MCF 10A (cell line): ENCODE measurements at regions of chr12 and their contacts with region 1.

Region 1: DNA sequence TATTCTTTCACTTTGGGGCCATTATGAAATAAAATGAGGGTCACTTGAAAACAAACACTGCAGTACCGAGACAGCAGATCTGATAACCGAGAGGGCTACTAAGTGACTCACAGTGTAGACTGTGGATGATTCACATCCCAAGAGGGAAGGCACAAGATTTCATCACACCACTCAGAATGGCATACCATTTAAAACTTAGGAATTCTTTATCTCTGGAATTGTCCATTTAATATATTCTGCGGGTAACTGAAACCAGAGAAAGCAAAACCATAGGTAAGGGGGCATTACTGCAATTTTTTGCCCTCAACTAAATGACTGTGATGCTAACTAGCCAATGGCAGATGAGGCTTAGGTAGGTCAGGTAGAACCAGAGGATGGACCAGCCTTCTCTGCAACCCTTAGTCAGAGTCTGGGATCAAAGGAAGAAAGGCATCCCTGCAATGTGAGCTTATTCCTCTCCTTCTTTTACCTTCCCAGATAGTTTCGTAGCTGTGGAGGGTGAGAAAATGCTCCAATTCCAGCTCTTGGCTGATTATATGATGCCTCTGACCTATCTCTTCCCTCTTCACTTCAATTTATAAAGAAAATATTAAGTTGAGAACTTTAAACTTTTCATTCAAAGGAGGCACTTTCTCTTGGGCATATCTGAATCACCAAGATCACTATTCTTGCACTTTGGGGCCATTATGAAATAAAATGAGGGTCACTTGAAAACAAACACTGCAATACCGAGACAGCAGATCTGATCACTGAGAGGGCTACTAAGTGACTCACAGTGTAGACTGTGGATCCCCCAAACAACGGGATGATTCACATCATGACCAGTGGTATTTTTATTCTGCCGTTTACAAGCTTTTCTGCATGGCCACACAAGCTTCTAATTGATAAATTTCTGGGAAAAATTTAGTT is 6.8 kb downstream of the ART4 start:
- DNase-seq: peak; percentile 88
- H3K4me3 Mint-ChIP-seq: peak overlapping the region; percentile 65
- H3K27ac Mint-ChIP-seq: peak overlapping the region; percentile 89
- H3K4me1 Mint-ChIP-seq: peaks cover 39% of the 10 kb centered on the region
- H3K27me3 Mint-ChIP-seq: no peaks in the 10 kb centered on the region
- CTCF ChIP-seq: no peak

Region 2: GRCh38 chr12:14303661-14304155 is 532.8 kb before region 1 on chr12:
- CTCF ChIA-PET with region 1: no interaction called
- POLR2A ChIA-PET with region 1: no interaction called
- intact Hi-C with region 1: no loop called
- DNase-seq: no peak
- H3K4me3 Mint-ChIP-seq: no peak overlapping the region
- H3K27ac Mint-ChIP-seq: no peak overlapping the region
- H3K4me1 Mint-ChIP-seq: peaks cover 8% of the 10 kb centered on the region
- H3K27me3 Mint-ChIP-seq: no peaks in the 10 kb centered on the region
- CTCF ChIP-seq: no peak

Region 3: DNA sequence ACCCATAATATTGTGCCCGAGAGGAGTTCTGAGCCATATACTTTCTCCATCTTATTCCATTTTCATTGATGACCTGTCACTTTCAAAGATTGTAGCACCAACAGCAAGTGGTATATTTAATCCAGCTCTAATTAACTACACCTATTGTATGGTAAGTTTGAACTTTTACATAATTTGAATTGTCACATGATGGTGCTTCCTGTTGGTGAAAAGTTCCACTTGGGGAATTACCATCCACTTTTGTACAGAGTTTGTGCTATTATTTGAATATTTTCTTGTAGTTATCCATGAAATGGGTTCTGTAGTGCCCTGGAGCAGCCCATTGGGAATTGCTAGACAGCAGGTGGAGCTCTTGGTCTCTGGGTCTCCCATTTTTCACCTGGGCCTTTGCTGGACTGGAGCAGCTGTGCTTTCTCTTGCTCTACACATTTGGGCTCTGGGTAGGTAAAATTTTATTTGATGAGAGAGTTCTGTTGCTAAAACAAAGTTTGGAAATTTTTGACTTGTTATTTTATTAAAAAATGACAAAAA is 25.5 kb before region 1 on chr12:
- CTCF ChIA-PET with region 1: interaction called, 18 read pairs
- POLR2A ChIA-PET with region 1: interaction called, 9 read pairs
- intact Hi-C with region 1: no loop called
- DNase-seq: peak; percentile 64
- H3K4me3 Mint-ChIP-seq: no peak overlapping the region
- H3K27ac Mint-ChIP-seq: no peak overlapping the region
- H3K4me1 Mint-ChIP-seq: peaks cover 6% of the 10 kb centered on the region
- H3K27me3 Mint-ChIP-seq: no peaks in the 10 kb centered on the region
- CTCF ChIP-seq: peak; percentile 65

Region 4: DNA sequence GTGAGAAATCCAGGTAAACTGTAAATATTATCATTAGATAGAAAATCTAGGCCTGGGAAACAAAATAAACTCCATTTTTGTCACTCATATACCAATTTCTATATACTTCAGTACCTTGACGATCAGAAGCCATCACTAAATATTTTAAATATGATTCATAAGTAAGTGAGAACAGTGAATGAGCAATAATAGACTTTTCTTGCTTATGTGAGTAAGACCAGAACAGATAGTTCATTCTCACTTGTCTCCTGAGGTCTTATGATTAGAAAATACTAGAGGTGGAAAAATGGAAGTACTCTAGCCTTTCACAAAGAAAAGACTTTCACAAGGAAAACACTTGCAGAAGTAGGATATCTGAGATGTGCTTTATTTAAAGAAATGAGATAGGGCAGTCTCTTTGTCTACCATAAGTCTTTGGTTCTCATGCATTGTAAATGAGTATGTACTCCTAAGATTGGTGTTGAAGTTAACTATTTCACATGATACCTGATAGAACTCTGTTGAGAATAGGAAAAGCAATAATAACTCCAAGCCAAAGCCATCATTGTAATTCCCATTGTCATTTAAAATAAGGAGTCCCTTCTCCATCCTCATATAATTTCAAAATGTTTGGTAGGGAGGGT is 12.4 kb before region 1 on chr12:
- CTCF ChIA-PET with region 1: interaction called, 4 read pairs
- POLR2A ChIA-PET with region 1: interaction called, 11 read pairs
- intact Hi-C with region 1: no loop called
- DNase-seq: no peak
- H3K4me3 Mint-ChIP-seq: no peak overlapping the region
- H3K27ac Mint-ChIP-seq: peak overlapping the region; percentile 67
- H3K4me1 Mint-ChIP-seq: peaks cover 19% of the 10 kb centered on the region
- H3K27me3 Mint-ChIP-seq: no peaks in the 10 kb centered on the region
- CTCF ChIP-seq: no peak